Colonic mucosa (tissue), 4 donors: ENCODE measurements at regions of chr16 and their contacts with region 1.

Region 1: DNA sequence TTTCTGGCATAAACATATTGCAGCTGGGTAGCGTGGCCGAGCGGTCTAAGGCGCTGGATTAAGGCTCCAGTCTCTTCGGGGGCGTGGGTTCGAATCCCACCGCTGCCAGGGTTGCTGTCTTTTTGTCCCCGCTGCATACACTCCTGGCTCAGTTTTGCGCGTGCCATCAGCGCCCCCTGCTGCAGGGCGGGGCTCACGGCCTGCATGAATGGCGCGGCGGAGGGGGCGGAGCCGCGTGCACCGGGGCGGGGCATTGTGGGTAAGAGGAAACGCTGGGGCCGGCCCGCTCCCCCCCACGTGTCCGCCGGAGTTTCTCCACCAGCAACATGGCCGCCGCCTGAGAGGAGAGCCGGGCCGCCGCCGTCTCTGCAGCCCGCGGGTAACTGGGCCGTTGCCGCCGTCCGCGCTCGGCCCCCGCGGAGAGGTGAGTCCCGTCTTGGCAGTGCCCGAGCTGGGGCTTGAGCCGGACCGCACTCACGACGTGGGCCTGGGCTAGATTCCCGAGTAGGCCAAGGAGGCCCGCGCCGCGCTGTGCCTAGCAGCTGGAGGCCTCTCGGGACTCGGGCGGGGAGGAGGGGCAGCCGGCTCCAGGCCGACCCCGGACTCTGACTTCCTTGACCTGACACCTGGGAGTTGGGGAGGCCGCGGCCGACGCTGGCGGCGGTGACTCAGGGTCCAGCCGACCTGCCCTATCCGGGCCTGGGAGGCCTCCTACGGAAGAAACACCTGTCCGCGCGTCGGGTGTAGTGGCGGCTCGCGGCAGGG is at the start of gene POLR3E:
- DNase-seq: peak; percentile 100
- H3K4me3 ChIP-seq: peak within 1 kb of the TSS; percentile 98
- H3K27ac ChIP-seq: peak within 1 kb of the TSS; percentile 92
- H3K4me1 ChIP-seq: no peaks in the 10 kb centered on the region
- H3K27me3 ChIP-seq: no peaks in the 10 kb centered on the region
- CTCF ChIP-seq: peak; percentile 91
- total RNA-seq, gene POLR3E: 34.4 to 43.4 TPM

Region 2: DNA sequence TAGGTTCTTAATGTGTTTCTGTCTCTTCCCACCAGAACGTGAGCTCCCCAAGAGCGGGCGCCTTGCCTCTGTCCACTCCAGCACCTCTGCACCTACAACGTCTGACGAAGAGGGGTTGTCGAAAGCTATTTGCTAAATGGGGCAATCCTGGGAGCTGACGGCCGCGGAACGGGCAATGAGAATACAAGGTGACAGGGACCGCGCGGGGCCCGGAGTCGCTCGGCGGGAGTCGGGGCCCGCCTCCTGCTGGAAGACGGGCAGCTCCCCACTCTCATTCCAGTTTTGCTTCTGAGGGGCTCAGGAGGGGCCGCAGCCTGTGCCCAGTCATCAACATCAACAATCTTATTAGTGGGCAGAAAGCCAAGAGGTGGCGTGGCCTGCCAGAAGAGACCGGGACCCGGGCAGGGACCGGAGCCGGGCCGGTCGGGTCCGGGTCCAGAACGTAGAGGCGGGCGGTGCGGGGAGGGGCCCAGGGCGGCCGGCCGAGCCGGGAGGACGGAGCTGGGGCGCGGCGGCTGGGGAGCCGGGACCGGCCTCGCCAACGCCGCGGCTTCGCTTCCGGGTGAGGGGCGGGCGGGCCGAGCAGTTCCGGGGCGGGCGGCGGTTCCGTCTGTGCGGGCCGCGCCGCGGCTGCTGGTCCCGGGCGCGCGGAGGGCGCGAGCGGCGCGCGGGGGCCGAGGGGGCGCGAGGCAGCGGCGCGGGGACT is 289.6 kb before region 1 on chr16 and contains the start of gene MOSMO:
- intact Hi-C with region 1: loop called (anchors 10 kb)
- DNase-seq: peak; percentile 69
- H3K4me3 ChIP-seq: peak within 1 kb of the TSS; percentile 92
- H3K27ac ChIP-seq: peak within 1 kb of the TSS; percentile 73
- H3K4me1 ChIP-seq: peaks cover 15% of the 10 kb centered on the region
- H3K27me3 ChIP-seq: no peaks in the 10 kb centered on the region
- CTCF ChIP-seq: no peak
- total RNA-seq, gene MOSMO: 6.4 to 9.2 TPM

Region 3: DNA sequence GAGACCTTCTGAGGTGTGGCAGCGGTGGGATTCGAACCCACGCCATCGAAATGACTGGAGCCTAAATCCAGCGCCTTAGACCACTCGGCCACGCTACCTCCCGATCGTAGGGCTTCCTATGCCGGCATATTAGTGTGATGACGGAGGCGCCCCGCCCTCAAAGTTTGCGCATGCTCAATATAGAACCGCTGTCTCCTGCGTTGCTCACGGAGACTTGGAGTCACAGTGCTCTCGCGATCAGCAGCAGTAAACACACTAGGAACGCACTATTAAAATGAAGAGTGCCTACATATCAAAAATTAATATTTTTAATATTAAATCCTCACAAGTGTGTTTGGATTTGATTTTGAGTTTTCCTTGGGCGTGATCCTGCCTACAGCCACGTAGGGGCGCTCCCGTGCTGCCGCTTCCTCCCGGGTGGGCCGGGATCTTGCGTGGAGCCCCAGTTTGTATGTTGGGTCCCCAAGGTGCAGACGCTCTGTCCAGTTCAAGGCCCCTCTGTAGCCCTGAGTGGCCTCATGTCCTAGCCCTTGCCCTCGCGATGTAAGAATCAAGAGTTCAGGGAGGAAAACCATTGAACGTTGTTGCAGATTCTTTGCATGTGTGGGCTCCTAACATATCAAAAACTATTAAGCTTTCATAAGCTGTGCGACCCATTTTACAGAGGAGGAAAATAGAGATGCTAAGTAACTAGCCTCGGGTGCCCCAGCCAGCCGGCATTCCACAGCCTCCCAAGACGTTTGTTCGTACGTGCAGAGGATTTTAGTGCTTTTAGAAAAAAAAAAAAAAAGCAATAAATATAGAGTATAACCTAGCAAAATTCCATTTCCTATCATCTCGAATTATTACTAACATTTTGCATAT is 101.4 kb before region 1 on chr16:
- intact Hi-C with region 1: loop called (anchors 2 kb)
- DNase-seq: peak; percentile 93
- H3K4me3 ChIP-seq: peak overlapping the region; percentile 33
- H3K27ac ChIP-seq: peak overlapping the region; percentile 42
- H3K4me1 ChIP-seq: no peaks in the 10 kb centered on the region
- H3K27me3 ChIP-seq: no peaks in the 10 kb centered on the region
- CTCF ChIP-seq: peak; percentile 93

Region 4: GRCh38 chr16:22232277-22233042 is 64.8 kb before region 1 on chr16:
- intact Hi-C with region 1: loop called (anchors 2 kb)
- DNase-seq: peak; percentile 98
- H3K4me3 ChIP-seq: no peak overlapping the region
- H3K27ac ChIP-seq: peak overlapping the region; percentile 79
- H3K4me1 ChIP-seq: peaks cover 13% of the 10 kb centered on the region
- H3K27me3 ChIP-seq: no peaks in the 10 kb centered on the region
- CTCF ChIP-seq: no peak

Region 5: DNA sequence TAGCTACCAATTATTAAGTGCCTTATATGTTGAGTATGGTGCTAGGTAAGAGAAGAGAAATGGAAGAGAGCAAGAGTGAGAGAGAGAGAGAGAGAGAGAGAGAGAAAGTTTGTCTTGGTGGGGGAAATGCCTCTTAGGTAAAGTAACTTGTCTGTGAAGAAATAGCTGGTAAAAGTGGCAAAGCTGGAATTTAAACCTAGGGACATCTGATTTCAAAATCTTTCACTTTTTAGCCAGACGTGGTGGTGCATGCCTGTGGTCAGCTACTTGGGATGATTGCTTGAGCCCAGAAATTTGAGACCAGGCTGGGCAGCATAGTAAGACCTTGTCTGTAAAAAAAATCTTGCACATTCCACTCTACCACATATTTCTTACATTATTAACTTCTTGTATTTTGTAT is 100.2 kb after region 1 on chr16:
- intact Hi-C with region 1: no loop called
- DNase-seq: no peak
- H3K4me3 ChIP-seq: no peak overlapping the region
- H3K27ac ChIP-seq: no peak overlapping the region
- H3K4me1 ChIP-seq: no peaks in the 10 kb centered on the region
- H3K27me3 ChIP-seq: no peaks in the 10 kb centered on the region
- CTCF ChIP-seq: no peak